Left ventricle myocardium inferior (tissue), 1 donor: ENCODE measurements at regions of chr14 and their contacts with region 1.

Region 1: GRCh38 chr14:63543000-63543825 is at the start of gene PPP2R5E:
- DNase-seq: peak; percentile 98
- H3K4me3 ChIP-seq: peak within 1 kb of the TSS; percentile 97
- H3K27ac ChIP-seq: peak within 1 kb of the TSS; percentile 95
- H3K4me1 ChIP-seq: peaks cover 44% of the 10 kb centered on the region
- H3K27me3 ChIP-seq: no peaks in the 10 kb centered on the region
- CTCF ChIP-seq: peak; percentile 18
- total RNA-seq, gene PPP2R5E: 34.5 TPM

Region 2: GRCh38 chr14:63401646-63402045 is 141.6 kb before region 1 on chr14:
- intact Hi-C with region 1: loop called (anchors 10 kb)
- DNase-seq: no peak
- H3K4me3 ChIP-seq: no peak overlapping the region
- H3K27ac ChIP-seq: no peak overlapping the region
- H3K4me1 ChIP-seq: peaks cover 22% of the 10 kb centered on the region
- H3K27me3 ChIP-seq: no peaks in the 10 kb centered on the region
- CTCF ChIP-seq: no peak

Region 3: DNA sequence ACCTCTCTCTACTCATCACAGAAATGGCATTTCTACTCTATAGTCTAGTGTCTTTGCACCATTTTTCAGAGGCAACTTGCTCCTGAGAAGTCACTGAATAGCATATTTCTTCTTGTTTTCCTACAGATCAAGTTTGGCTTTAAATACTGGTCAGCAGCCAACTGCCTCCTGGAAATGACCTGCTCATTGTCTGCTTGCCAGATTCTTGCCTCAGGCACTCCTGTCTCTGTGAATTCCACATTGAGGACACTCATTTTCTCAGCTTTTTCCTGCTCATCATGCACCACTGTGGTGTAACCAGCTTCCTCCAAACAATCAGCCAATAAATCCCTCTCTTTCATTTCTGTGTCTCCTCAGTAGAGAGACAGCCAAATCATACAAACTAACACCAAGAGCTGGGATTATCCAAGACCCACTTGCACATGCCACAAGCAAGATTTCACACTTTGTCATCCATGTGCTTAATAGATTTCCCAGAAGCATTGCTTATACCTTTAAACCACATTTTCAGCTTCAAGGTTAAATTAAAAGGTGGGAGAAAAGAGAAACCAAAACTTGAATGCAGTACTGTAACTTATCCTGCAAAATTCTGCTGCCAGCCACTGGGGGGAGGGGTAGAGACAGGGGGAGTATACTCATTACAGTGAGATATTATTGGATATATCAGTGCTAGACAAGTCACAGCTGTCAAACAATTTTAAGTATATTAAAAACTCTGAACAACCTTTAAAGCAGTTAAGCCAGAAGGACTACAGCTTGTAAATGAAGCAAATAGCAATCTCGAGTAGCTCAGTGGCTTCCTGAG is 105.1 kb before region 1 on chr14:
- intact Hi-C with region 1: no loop called
- DNase-seq: peak; percentile 38
- H3K4me3 ChIP-seq: peak overlapping the region; percentile 42
- H3K27ac ChIP-seq: peak overlapping the region; percentile 78
- H3K4me1 ChIP-seq: peaks cover 78% of the 10 kb centered on the region
- H3K27me3 ChIP-seq: no peaks in the 10 kb centered on the region
- CTCF ChIP-seq: peak; percentile 29